Heart left ventricle (tissue), 16 donors: ENCODE measurements at regions of chr9 and their contacts with region 1.

Region 1: GRCh38 chr9:108272349-108272899 is 583.4 kb downstream of the ACTL7B start:
- DNase-seq: peak; percentile 31 to 65 (median 53)
- ATAC-seq: peak; percentile 75 to 91 (median 84)
- H3K4me3 ChIP-seq: peak overlapping the region in 6 of 12 donors; percentile 6 to 42 (median 36)
- H3K27ac ChIP-seq: peak overlapping the region in 7 of 12 donors; percentile 23 to 72 (median 40)
- H3K4me1 ChIP-seq: peaks cover 0 to 20% (median 0%) of the 10 kb centered on the region in 12 donors
- H3K27me3 ChIP-seq: no peaks in the 10 kb centered on the region
- CTCF ChIP-seq: peak in 11 of 12 donors; percentile 55 to 75 (median 65)
- POLR2A ChIP-seq: no peak

Region 2: GRCh38 chr9:107484117-107484723 is 788.2 kb before region 1 on chr9:
- intact Hi-C with region 1: loop called (anchors 2 to 10 kb)
- DNase-seq: peak in 2 of 5 donors; percentile 41 to 44
- ATAC-seq: peak; percentile 53 to 69 (median 62)
- H3K4me3 ChIP-seq: peak overlapping the region in 11 of 12 donors; percentile 13 to 92 (median 80)
- H3K27ac ChIP-seq: peak overlapping the region in 9 of 12 donors; percentile 6 to 97 (median 94)
- H3K4me1 ChIP-seq: peaks cover 0 to 40% (median 2%) of the 10 kb centered on the region in 12 donors
- H3K27me3 ChIP-seq: peaks cover 0 to 16% (median 0%) of the 10 kb centered on the region in 9 donors
- CTCF ChIP-seq: peak; percentile 23 to 78 (median 61)
- POLR2A ChIP-seq: no peak

Region 3: DNA sequence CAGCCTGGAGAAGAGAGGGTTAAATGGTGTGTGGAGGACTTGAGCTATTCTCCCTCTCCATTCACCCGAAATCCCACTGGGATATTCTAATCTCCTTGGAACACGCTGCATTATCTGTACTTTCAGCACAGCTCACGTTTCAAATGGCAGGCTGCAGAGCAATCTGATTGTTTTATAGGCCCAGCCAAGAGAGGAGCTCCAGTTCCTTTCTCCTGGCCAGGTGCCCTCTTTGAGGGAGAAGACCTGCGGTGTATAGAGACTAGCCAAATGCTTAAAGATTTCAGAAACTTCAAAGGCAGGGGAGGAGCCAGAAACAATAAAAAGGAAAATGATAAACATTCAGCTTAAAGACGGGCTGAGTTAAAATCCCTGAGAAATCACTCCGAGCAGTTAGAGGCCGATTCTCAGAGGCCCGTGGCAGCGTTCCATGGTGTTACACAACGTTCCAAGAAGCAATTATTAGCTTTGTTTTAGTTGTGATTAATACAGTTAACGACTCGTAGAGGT is 218.8 kb before region 1 on chr9:
- intact Hi-C with region 1: loop called in 1 of 10 experiments (anchors 10 kb)
- DNase-seq: peak in 4 of 5 donors; percentile 29 to 72 (median 56)
- ATAC-seq: peak; percentile 45 to 76 (median 54)
- H3K4me3 ChIP-seq: peak overlapping the region in 1 of 12 donors; percentile 1
- H3K27ac ChIP-seq: peak overlapping the region in 8 of 12 donors; percentile 3 to 65 (median 38)
- H3K4me1 ChIP-seq: peaks cover 0 to 43% (median 14%) of the 10 kb centered on the region in 12 donors
- H3K27me3 ChIP-seq: peaks cover 0 to under 1% (median 0%) of the 10 kb centered on the region in 9 donors
- CTCF ChIP-seq: no peak
- POLR2A ChIP-seq: no peak

Region 4: DNA sequence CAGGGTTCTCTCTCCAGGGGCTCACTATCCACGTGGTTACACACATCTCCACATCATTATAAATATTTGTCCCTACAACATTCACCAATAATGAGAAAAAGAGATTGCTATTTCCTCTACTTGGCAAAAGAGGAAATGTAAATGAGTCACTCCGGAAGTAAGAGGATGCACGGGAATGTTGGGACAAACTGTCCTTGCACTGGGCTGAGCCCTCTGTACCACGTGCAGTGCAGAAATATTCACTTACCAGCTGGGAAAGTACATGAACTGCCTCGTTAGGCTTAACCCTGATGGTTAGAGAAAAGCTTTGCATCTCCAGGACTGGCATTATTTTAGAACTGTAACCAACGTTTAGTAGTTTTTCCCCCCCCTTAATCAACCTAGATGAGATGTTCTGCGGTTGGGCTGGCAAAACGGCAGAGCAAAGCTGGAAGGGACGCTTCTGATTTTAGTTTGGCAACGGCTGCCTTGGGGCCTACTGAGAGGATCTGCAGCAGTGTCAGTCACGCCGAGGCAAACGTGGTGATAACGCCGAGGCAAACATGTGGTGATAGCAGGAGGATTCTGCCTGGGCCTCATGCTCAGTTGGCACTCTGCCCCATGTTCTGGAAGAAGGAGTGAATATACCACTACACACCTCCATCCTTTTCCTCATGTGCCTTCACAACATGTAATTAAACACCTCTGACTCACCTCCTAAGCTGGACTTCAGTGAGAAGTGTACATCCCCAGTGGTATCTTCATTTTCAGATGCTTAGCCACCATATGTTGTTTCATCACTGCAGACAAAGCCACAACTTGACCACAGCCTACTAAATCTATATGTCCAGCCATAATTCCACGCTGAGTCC is 121.5 kb before region 1 on chr9:
- intact Hi-C with region 1: loop called in 2 of 10 experiments (anchors 5 to 10 kb)
- DNase-seq: peak; percentile 20 to 63 (median 43)
- ATAC-seq: peak; percentile 92 to 97 (median 96)
- H3K4me3 ChIP-seq: no peak overlapping the region
- H3K27ac ChIP-seq: peak overlapping the region; percentile 32 to 82 (median 66)
- H3K4me1 ChIP-seq: peaks cover 0 to 26% (median 13%) of the 10 kb centered on the region in 12 donors
- H3K27me3 ChIP-seq: no peaks in the 10 kb centered on the region
- CTCF ChIP-seq: no peak
- POLR2A ChIP-seq: no peak

Region 5: DNA sequence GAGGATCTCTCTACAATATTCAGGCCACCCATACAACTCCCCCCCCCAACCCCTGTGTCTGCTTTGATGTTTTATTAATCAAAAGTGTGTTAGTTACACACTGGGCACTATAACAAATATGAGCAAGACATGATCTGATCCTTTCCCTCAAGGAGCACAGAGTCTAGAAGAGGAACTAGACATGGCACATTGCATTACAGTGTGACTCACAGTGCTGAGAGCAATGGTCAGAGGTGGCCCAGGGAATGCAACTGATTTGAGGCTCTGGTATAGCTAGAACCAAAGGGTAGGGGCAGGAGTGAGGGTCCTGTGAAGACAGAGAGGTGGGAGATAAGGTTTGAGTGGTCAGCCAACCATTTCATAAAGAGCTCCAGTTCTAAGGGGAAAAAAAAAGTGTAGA is 44.2 kb after region 1 on chr9:
- intact Hi-C with region 1: no loop called
- DNase-seq: no peak
- ATAC-seq: no peak
- H3K4me3 ChIP-seq: no peak overlapping the region
- H3K27ac ChIP-seq: no peak overlapping the region
- H3K4me1 ChIP-seq: no peaks in the 10 kb centered on the region
- H3K27me3 ChIP-seq: peaks cover 0 to 6% (median 0%) of the 10 kb centered on the region in 9 donors
- CTCF ChIP-seq: no peak
- POLR2A ChIP-seq: no peak

Region 6: GRCh38 chr9:108551030-108551838 is 278.8 kb after region 1 on chr9:
- intact Hi-C with region 1: loop called in 1 of 10 experiments (anchors 10 kb)
- DNase-seq: no peak
- ATAC-seq: no peak
- H3K4me3 ChIP-seq: no peak overlapping the region
- H3K27ac ChIP-seq: no peak overlapping the region
- H3K4me1 ChIP-seq: peaks cover 0 to 6% (median 0%) of the 10 kb centered on the region in 12 donors
- H3K27me3 ChIP-seq: no peaks in the 10 kb centered on the region
- CTCF ChIP-seq: no peak
- POLR2A ChIP-seq: no peak